ENCODE measurements at regions of chr14 and their contacts with region 1.

Region 1: DNA sequence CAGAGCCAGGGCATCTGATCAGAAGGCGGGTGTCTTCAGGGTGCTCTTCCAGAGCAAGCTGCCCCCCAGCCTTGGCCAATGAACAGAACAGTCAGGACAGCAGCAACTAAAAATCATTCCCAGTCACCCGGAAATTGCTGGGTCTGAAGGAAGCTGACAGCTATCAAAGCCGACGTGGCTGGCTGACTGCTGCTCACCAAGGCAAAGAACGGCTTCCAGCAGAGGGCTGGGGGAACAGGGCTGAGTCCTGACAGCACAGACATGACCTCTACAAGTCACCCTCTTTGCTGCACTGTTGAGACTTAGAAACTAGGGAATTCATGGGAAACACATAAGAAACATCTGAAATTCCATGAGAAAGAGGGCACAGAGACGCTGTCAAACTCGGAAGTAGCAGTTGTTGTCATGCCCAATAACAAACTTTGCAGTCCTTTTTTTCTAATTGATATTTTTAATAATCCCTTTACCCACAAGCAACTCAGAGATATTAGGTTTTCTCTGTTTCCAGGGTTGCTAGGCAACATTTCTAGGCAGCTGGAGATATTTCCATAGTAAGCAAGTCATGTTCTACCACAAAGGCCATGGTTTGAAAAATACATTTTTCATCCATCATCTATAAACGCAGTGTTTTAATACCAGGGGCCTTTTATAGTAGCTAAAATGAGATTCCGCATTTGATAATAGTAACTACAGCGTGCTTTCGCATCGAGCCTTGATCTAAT is 365.2 kb downstream of the SEC23A start:
- DNase-seq: no peak
- ATAC-seq: no peak
- H3K4me3 ChIP-seq: no peak overlapping the region
- H3K27ac ChIP-seq: no peak overlapping the region
- H3K4me1 ChIP-seq: no peaks in the 10 kb centered on the region
- H3K27me3 ChIP-seq: no peaks in the 10 kb centered on the region
- CTCF ChIP-seq: no peak
- POLR2A ChIP-seq: no peak
- RAD21 ChIP-seq: no peak

Region 2: GRCh38 chr14:38775986-38776385 is 38.1 kb after region 1 on chr14:
- CTCF ChIA-PET with region 1: no interaction called
- POLR2A ChIA-PET with region 1: no interaction called
- dilution Hi-C with region 1: no loop called
- in situ Hi-C with region 1: no loop called
- intact Hi-C with region 1: loop called (anchors 1 kb)
- DNase-seq: no peak
- ATAC-seq: no peak
- H3K4me3 ChIP-seq: no peak overlapping the region
- H3K27ac ChIP-seq: no peak overlapping the region
- H3K4me1 ChIP-seq: no peaks in the 10 kb centered on the region
- H3K27me3 ChIP-seq: no peaks in the 10 kb centered on the region
- CTCF ChIP-seq: no peak
- POLR2A ChIP-seq: no peak
- RAD21 ChIP-seq: no peak

Measured in IMR-90 (cell line).